ENCODE measurements at regions of chr20 and their contacts with region 1.

Region 1: DNA sequence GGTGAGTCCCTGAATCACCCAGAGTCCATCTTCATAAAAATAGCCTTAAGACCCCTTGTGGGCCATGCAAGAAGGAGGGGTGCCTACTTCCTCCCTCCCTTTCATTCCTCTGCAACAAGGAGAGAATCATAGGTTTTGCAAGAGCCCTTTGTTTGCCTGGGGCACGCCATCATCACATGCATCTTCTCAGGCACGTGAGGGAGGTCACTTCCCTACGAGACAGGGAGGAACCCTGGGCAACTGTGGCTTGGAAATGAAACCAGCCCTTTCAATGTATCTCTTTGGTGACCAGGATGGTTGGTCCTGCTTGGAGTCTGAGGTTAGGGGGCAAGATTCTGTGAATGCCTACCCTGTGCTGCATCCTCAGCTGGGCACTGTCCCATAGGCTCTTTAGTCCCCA is 194.8 kb downstream of the MAFB start:
- DNase-seq: peak; percentile 78
- ATAC-seq: no peak

Region 2: DNA sequence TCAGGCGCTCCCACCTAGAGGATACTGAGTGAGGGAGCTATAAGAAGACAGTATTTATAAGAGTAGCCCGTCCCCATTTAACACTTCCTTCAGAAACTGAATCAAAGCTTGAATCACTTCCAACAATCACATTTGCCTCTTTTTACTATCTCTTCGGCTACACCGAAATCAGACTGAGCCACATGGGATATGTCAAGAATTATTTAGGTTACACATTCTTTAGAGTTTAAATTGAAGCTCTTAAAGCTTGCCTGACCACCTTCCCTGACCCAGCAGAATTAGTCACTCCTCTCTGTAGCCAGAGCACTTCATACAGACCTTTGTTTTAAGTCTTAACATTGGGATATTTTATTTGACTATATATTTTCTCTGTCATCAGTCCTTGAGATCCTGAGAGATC is 31.1 kb after region 1 on chr20:
- intact Hi-C with region 1: loop called (anchors 1 kb)
- DNase-seq: no peak
- ATAC-seq: no peak

Measured in Right ventricle myocardium inferior (tissue), 1 donor.